B cell (primary cell): ENCODE measurements at regions of chr2 and their contacts with region 1.

Region 1: GRCh38 chr2:152635635-152636298 is 81.5 kb downstream of the PRPF40A start:
- DNase-seq: peak; percentile 72
- ATAC-seq: peak; percentile 61
- H3K4me3 ChIP-seq: no peak overlapping the region
- H3K4me3 Mint-ChIP-seq: no peak overlapping the region
- H3K27ac ChIP-seq: no peak overlapping the region
- H3K27ac Mint-ChIP-seq: no peak overlapping the region
- H3K4me1 ChIP-seq: no peaks in the 10 kb centered on the region
- H3K4me1 Mint-ChIP-seq: peaks cover 5% of the 10 kb centered on the region
- H3K27me3 ChIP-seq: no peaks in the 10 kb centered on the region
- H3K27me3 Mint-ChIP-seq: no peaks in the 10 kb centered on the region
- CTCF ChIP-seq: peak; percentile 83

Region 2: DNA sequence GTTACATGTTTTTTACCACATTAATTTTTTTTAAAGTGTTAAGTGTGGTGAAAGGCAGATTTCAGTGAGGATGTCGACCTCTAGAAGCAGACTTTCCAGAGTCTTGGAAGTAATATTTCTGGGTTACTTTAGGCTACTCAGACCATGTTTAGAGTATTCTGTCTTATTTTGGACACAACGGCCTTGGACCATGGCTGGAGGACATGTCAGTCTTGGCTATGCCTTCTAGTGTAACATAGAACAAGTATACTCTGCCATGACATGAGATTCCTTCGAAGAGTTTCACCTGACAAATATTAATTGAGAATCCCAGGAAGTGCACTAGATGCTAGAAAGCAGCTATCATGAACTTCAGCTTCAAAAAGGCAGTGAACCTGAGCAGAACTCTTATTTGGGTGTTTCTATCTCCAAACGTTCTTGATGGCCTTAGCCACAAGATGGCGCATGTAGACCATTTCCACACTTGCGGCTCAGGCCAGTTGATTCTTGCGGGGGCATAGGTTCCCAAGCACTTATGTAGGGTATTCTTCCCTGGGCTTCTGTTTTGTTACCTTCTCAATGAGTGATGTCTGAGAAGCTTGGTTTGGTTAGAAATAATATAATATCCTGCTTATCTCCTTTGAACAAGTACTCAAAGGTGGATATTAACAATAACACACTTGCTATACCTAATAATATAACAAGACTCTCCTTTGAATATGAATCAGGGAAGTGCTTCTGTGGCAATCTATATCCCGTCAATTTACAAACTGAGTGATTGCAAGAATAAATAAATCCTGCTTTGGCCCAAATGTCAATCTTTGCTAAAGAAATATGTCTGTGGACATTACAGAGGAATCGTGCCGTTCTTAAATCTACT is 598.9 kb before region 1 on chr2:
- CTCF ChIA-PET with region 1: interaction called, 19 read pairs
- POLR2A ChIA-PET with region 1: no interaction called
- intact Hi-C with region 1: loop called (anchors 1 kb)
- DNase-seq: peak; percentile 72
- ATAC-seq: peak; percentile 58
- H3K4me3 ChIP-seq: no peak overlapping the region
- H3K4me3 Mint-ChIP-seq: no peak overlapping the region
- H3K27ac ChIP-seq: no peak overlapping the region
- H3K27ac Mint-ChIP-seq: no peak overlapping the region
- H3K4me1 ChIP-seq: no peaks in the 10 kb centered on the region
- H3K4me1 Mint-ChIP-seq: no peaks in the 10 kb centered on the region
- H3K27me3 ChIP-seq: no peaks in the 10 kb centered on the region
- H3K27me3 Mint-ChIP-seq: no peaks in the 10 kb centered on the region
- CTCF ChIP-seq: peak; percentile 82

Region 3: GRCh38 chr2:152189622-152190495 is 445.9 kb before region 1 on chr2:
- CTCF ChIA-PET with region 1: interaction called, 53 read pairs
- POLR2A ChIA-PET with region 1: no interaction called
- intact Hi-C with region 1: loop called (anchors 1 kb)
- DNase-seq: peak; percentile 47
- ATAC-seq: peak; percentile 60
- H3K4me3 ChIP-seq: no peak overlapping the region
- H3K4me3 Mint-ChIP-seq: no peak overlapping the region
- H3K27ac ChIP-seq: no peak overlapping the region
- H3K27ac Mint-ChIP-seq: no peak overlapping the region
- H3K4me1 ChIP-seq: no peaks in the 10 kb centered on the region
- H3K4me1 Mint-ChIP-seq: no peaks in the 10 kb centered on the region
- H3K27me3 ChIP-seq: peaks cover 0 to 9% (median 3%) of the 10 kb centered on the region in 4 experiments
- H3K27me3 Mint-ChIP-seq: peaks cover 33% of the 10 kb centered on the region
- CTCF ChIP-seq: peak; percentile 75

Region 4: DNA sequence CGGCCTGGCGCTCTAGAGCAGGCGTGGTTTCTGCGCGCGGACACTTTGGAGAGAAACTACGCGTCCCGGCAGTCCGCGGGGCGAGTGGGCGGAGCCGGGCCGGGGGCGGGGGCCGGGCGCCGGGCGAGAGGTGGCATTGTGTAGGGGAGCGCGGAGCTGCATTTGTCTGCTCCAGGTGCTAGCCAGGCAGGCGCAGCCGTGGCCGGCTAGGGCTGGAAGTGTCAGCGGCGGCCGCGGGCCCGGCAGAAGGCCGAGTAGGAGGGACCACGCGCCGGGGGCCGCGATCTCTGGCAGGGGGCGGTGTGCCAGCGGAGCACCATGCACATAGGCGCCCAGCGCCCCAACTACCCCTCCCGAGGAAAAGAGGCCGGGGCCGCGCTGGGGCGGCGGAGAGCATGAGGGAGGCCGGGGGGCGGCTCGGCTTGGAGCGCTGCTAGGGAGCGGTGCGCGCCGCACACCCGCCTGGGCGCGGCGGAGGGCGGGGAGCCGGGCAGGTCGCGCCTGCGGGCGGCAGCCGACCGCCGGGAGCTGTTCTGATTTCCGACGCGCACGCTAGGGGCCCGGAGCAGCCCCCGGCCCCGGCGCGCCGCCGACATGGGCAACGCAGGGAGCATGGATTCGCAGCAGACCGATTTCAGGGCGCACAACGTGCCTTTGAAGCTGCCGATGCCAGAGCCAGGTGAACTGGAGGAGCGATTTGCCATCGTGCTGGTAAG is 300.6 kb before region 1 on chr2 and contains the start of gene FMNL2:
- CTCF ChIA-PET with region 1: interaction called, 9 read pairs
- POLR2A ChIA-PET with region 1: no interaction called
- intact Hi-C with region 1: loop called (anchors 5 kb)
- DNase-seq: peak; percentile 75
- ATAC-seq: peak; percentile 88
- H3K4me3 ChIP-seq: peak within 1 kb of the TSS; percentile 51 to 78 (median 64)
- H3K4me3 Mint-ChIP-seq: peak within 1 kb of the TSS; percentile 93
- H3K27ac ChIP-seq: no peak within 1 kb of the TSS
- H3K27ac Mint-ChIP-seq: peak within 1 kb of the TSS; percentile 79
- H3K4me1 ChIP-seq: peaks cover 10 to 12% of the 10 kb centered on the region in 2 donors
- H3K4me1 Mint-ChIP-seq: peaks cover 17% of the 10 kb centered on the region
- H3K27me3 ChIP-seq: peaks cover 0 to 16% (median 5%) of the 10 kb centered on the region in 4 experiments
- H3K27me3 Mint-ChIP-seq: peaks cover 13% of the 10 kb centered on the region
- CTCF ChIP-seq: no peak
- total RNA-seq, gene FMNL2: 8.4 and 8.8 TPM in 2 replicates

Region 5: GRCh38 chr2:152594022-152594766 is 41.6 kb before region 1 on chr2:
- CTCF ChIA-PET with region 1: interaction called, 15 read pairs
- POLR2A ChIA-PET with region 1: no interaction called
- intact Hi-C with region 1: no loop called
- DNase-seq: peak; percentile 61
- ATAC-seq: peak; percentile 88
- H3K4me3 ChIP-seq: no peak overlapping the region
- H3K4me3 Mint-ChIP-seq: no peak overlapping the region
- H3K27ac ChIP-seq: no peak overlapping the region
- H3K27ac Mint-ChIP-seq: peak overlapping the region; percentile 62
- H3K4me1 ChIP-seq: peaks cover 10 to 11% of the 10 kb centered on the region in 2 donors
- H3K4me1 Mint-ChIP-seq: peaks cover 20% of the 10 kb centered on the region
- H3K27me3 ChIP-seq: no peaks in the 10 kb centered on the region
- H3K27me3 Mint-ChIP-seq: no peaks in the 10 kb centered on the region
- CTCF ChIP-seq: no peak

Region 6: GRCh38 chr2:152648336-152648735 is 12.6 kb after region 1 on chr2:
- CTCF ChIA-PET with region 1: interaction called, 19 read pairs
- POLR2A ChIA-PET with region 1: no interaction called
- intact Hi-C with region 1: no loop called
- DNase-seq: no peak
- ATAC-seq: no peak
- H3K4me3 ChIP-seq: no peak overlapping the region
- H3K4me3 Mint-ChIP-seq: no peak overlapping the region
- H3K27ac ChIP-seq: no peak overlapping the region
- H3K27ac Mint-ChIP-seq: no peak overlapping the region
- H3K4me1 ChIP-seq: no peaks in the 10 kb centered on the region
- H3K4me1 Mint-ChIP-seq: no peaks in the 10 kb centered on the region
- H3K27me3 ChIP-seq: no peaks in the 10 kb centered on the region
- H3K27me3 Mint-ChIP-seq: no peaks in the 10 kb centered on the region
- CTCF ChIP-seq: peak; percentile 24